Head of caudate nucleus (tissue), 42 donors: ENCODE measurements at regions of chr18 and their contacts with region 1.

Region 1: DNA sequence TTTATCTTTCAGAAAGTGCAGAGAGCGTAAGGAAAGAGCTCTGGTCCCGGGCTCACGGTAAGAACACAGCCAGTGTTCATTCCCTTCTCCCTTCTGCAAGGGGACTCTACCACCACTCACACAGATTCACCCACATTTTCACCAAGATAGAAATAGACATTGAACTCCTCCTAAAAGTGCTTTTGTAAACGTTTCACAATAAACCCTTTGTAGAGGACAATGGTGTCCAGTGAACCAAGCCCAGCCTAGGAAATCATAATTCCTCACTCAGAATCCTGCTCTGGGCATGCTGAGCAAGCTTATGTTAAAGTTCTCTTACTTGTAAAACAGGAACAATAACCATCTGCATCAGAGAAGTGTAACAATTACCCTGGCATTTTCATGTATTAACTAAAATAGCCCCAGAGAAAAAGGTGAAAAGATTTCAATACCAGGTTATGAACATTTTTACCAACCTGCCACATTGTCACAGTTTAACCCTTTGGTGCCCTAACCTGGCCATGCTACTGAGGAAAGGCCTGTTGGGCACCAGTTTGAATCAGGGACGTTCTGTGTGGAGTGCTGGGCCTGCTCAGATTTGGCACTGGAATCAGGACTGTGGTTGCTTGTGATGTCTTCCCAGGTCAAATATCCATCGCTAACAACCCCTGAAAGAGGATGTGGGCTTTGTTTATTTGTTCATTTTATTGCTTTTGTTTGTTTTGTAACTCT is 22.5 kb upstream of the NDUFV2 start:
- DNase-seq: peak in 10 of 42 donors; percentile 6 to 63 (median 25)

Region 2: DNA sequence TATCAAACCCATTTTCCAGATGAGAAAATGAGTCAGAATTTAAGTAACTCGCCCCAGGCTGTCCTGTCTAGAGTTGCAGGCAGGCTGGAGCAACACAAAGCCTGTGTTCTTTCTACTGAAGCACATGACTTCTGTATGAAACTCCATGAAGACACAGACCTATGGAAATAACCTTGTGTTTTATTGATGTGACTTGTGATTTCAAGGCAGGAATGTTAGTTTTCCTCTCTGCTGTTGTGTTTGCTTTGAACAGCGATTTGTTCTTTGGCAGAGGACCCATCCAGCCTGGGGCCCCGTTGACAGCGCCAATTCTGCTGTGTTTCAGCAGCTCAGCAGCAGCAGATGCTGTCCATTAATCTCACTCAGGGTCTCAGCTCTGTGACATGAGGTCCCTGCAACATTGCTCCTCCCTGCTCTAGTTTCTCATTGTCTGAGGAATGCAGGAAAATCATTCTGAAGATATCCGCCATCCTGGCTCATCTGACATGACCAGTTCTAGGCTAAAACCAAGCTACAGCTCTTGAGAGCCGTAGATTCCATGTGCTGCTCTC is 815.0 kb before region 1 on chr18:
- intact Hi-C with region 1: no loop called
- DNase-seq: peak in 1 of 42 donors; percentile 18

Region 3: DNA sequence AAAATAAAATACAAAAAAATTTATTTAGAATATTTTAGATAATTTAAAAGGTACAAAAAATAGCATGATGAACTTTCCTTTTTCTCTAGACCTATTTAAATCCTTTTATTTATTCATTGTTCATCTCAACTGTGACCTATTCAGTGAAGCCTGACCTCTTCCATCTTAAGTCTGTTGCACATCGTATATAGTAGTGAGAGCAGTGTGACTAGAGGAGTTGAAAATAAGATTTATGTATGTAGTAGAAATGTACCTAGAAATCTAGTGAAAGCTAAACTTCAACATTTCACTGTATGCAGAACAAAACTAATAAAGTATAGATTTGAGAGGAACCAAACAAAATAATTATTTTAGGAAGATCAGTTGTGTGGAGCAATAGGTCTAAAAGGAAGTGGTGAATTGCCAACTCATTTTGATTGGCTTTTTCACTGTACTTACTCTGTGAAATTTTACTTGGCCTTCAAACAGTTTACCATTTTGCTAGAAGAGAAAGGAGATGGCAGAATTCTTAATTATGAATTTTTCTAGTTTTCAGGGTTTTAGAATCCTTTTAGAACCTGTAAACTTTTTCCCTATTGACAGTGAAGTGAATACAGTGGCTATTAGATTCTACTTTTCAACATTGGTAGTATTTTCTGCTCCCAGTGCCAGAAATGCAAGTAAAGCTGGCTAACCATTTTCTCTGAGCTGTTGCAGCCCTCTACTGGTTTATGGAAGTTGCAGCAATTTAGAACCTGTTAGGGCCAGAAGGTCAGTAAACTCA is 67.6 kb after region 1 on chr18:
- intact Hi-C with region 1: loop called (anchors 5 kb)
- DNase-seq: peak in 21 of 42 donors; percentile 19 to 81 (median 49)